AG04450 (cell line): ENCODE measurements at regions of chr10 and their contacts with region 1.

Region 1: GRCh38 chr10:75235375-75236177 is at the start of gene COMTD1:
- DNase-seq: peak; percentile 57
- H3K4me3 ChIP-seq: peak within 1 kb of the TSS; percentile 66
- H3K27ac ChIP-seq: no peak within 1 kb of the TSS
- H3K27me3 ChIP-seq: no peaks in the 10 kb centered on the region
- CTCF ChIP-seq: peak; percentile 100
- polyA plus RNA-seq, gene COMTD1: 2.0 and 2.3 TPM in 2 replicates

Region 2: DNA sequence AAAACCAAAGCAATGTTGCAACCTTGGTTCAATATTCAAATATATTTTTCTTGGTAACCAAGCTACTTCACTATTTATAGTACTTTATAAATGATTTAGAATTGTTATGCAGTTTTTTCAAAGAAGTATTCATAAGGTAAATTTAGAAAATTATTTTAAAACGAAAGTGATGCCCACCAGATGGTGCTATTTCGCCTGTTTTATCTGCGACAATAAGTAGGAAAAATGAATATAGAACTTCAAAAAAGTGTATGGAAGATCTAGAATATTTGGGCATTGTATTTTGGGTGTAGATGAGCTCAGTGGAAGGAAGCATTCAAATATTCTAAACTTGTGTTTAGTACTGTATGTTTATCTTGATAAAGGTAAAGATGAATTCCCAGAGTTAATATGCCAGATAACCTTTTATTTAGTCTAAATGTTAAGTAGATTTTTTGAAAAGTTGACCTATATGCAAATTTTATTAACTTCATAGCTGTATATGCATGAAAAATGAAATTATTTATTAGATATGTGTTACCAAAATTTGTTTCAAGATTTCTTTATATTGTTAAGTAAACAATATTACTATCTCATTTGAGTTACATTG is 991.4 kb before region 1 on chr10:
- CTCF ChIA-PET with region 1: interaction called, 36 read pairs
- POLR2A ChIA-PET with region 1: no interaction called
- DNase-seq: peak; percentile 26
- H3K4me3 ChIP-seq: no peak overlapping the region
- H3K27ac ChIP-seq: no peak overlapping the region
- H3K27me3 ChIP-seq: no peaks in the 10 kb centered on the region
- CTCF ChIP-seq: peak; percentile 48

Region 3: GRCh38 chr10:75111367-75111906 is 124.1 kb before region 1 on chr10 and contains the start of gene SAMD8:
- CTCF ChIA-PET with region 1: interaction called, 11 read pairs
- POLR2A ChIA-PET with region 1: interaction called, 4 read pairs
- DNase-seq: peak; percentile 92
- H3K4me3 ChIP-seq: peak within 1 kb of the TSS; percentile 93
- H3K27ac ChIP-seq: peak within 1 kb of the TSS; percentile 93
- H3K27me3 ChIP-seq: no peaks in the 10 kb centered on the region
- CTCF ChIP-seq: no peak; the same call in 1 of the 2 replicates
- polyA plus RNA-seq, gene SAMD8: 28.2 and 32.2 TPM in 2 replicates

Region 4: DNA sequence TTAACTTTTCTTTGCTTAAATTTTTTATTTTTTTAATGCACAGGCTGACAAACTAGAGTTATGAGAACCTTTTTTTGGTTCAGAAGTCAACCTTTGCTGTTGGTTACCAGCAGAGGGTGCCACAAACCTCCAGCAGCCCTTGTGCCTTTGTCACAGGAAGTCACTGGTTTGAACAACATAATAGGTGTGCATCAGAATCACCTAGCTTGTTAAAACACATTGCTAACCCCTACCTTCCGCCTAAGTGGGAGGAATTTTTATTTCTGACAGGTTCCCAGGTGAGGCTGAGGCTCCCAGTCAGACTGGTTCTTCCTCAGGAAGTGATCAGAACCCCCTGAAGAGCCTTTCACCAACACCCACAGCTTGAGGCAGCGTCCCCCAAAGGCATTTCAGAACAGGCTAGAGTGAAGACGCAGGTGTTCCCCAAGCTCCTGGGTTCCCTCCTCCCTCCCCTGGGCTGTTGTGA is 47.6 kb before region 1 on chr10:
- CTCF ChIA-PET with region 1: interaction called, 14 read pairs
- POLR2A ChIA-PET with region 1: interaction called, 3 read pairs
- DNase-seq: no peak
- H3K4me3 ChIP-seq: no peak overlapping the region
- H3K27ac ChIP-seq: no peak overlapping the region
- H3K27me3 ChIP-seq: no peaks in the 10 kb centered on the region
- CTCF ChIP-seq: peak; percentile 77

Region 5: DNA sequence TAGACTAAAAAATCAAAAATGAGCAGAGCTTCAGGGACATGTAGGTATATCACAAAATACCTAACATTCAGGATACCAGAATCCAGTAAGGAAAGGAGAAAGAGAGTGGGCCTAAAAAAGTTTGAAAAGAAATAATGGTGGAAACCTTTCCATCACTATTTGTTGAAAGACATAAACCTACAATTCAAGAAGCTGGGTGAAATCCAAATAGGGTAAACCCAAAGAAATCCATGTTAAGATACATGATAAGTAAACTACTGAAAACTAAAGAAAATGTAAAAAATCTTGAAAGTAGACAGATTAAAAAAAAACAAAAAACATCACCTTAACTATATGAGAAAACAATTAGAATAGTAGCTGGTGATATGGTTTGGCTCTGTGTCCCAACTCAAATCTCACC is 76.9 kb after region 1 on chr10:
- CTCF ChIA-PET with region 1: no interaction called
- POLR2A ChIA-PET with region 1: no interaction called
- DNase-seq: no peak
- H3K4me3 ChIP-seq: no peak overlapping the region
- H3K27ac ChIP-seq: no peak overlapping the region
- H3K27me3 ChIP-seq: peaks cover 7% of the 10 kb centered on the region
- CTCF ChIP-seq: no peak